H1 (cell line): ENCODE measurements at regions of chr18 and their contacts with region 1.

Region 1: GRCh38 chr18:76670564-76671288 is 151.6 kb upstream of the ZNF236 start:
- DNase-seq: no peak
- H3K4me3 ChIP-seq: no peak overlapping the region
- H3K27ac ChIP-seq: no peak overlapping the region
- H3K4me1 ChIP-seq: peaks cover 0 to 10% (median 0%) of the 10 kb centered on the region in 4 experiments; a peak in 1 of 7 replicates
- H3K27me3 ChIP-seq: no peaks in the 10 kb centered on the region
- CTCF ChIP-seq: no peak
- EP300 ChIP-seq: no peak
- POLR2A ChIP-seq: no peak
- RAD21 ChIP-seq: no peak

Region 2: GRCh38 chr18:76686737-76687262 is 16.1 kb after region 1 on chr18:
- CTCF ChIA-PET with region 1: interaction called, 10 read pairs
- POLR2A ChIA-PET with region 1: no interaction called
- DNase-seq: peak in 1 of 2 experiments; percentile 67
- H3K4me3 ChIP-seq: no peak overlapping the region; a peak in 1 of 8 replicates
- H3K27ac ChIP-seq: 0 out of 2 replicates have a peak overlapping the region, but pooled peaks have one; percentile 13
- H3K4me1 ChIP-seq: peaks cover 0 to 11% (median 0%) of the 10 kb centered on the region in 4 experiments; a peak in 5 of 7 replicates
- H3K27me3 ChIP-seq: no peaks in the 10 kb centered on the region
- CTCF ChIP-seq: peak in 2 of 3 experiments; percentile 51 to 55; a peak in 3 of 4 replicates
- EP300 ChIP-seq: no peak
- POLR2A ChIP-seq: no peak
- RAD21 ChIP-seq: peak; percentile 59 to 68

Region 3: GRCh38 chr18:77067291-77068061 is 396.8 kb after region 1 on chr18:
- CTCF ChIA-PET with region 1: no interaction called
- POLR2A ChIA-PET with region 1: no interaction called
- DNase-seq: no peak
- H3K4me3 ChIP-seq: no peak overlapping the region
- H3K27ac ChIP-seq: no peak overlapping the region
- H3K4me1 ChIP-seq: peaks cover 0 to 6% (median 2%) of the 10 kb centered on the region in 4 experiments; a peak in 4 of 7 replicates
- H3K27me3 ChIP-seq: no peaks in the 10 kb centered on the region
- CTCF ChIP-seq: no peak
- EP300 ChIP-seq: no peak
- POLR2A ChIP-seq: no peak
- RAD21 ChIP-seq: no peak